Activated naive CD4-positive, alpha-beta T cell treated with anti-CD3 and anti-CD28 coated beads for 36 hours (primary cell): ENCODE measurements at regions of chr14 and their contacts with region 1.

Region 1: GRCh38 chr14:68795597-68796417 is 2.9 kb upstream of the ZFP36L1 start:
- DNase-seq: peak; percentile 85
- H3K4me3 Mint-ChIP-seq: peak overlapping the region; percentile 90
- H3K27ac Mint-ChIP-seq: peak overlapping the region; percentile 100
- H3K4me1 Mint-ChIP-seq: peaks cover 44% of the 10 kb centered on the region
- H3K27me3 Mint-ChIP-seq: no peaks in the 10 kb centered on the region

Region 2: DNA sequence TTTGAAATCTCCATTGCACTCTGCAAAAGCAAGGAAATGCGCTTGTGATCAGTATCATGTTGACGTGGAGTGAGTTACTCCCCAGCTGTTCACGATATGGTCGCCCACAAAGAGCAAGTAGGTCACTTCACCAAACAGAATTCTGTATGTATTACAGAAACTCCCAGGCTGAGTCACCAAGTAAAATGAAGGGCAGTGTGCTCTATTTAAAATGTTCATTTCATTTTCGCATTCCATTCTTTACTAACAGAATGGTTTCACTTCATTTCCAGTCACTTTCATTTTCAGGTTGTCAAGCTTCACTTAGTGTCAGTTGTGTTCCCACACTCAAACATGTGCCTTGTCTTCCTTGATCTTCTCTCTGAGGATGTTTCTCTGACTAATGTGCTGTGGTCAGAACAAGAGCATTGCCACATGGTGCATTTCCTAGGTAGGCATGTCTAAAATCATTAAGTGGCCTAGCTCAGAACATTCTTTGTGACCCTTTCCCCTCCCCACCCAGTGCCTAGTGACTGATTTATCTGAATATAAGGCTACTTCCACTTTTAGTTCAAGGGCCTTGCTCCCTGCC is 585.0 kb before region 1 on chr14:
- CTCF ChIA-PET with region 1: no interaction called
- intact Hi-C with region 1: loop called (anchors 2 kb)
- DNase-seq: peak; percentile 74
- H3K4me3 Mint-ChIP-seq: peak overlapping the region; percentile 11
- H3K27ac Mint-ChIP-seq: peak overlapping the region; percentile 57
- H3K4me1 Mint-ChIP-seq: peaks cover 48% of the 10 kb centered on the region
- H3K27me3 Mint-ChIP-seq: no peaks in the 10 kb centered on the region

Region 3: GRCh38 chr14:68685419-68686204 is 110.2 kb before region 1 on chr14:
- CTCF ChIA-PET with region 1: no interaction called
- intact Hi-C with region 1: loop called (anchors 1 kb)
- DNase-seq: peak; percentile 90
- H3K4me3 Mint-ChIP-seq: peak overlapping the region; percentile 19
- H3K27ac Mint-ChIP-seq: peak overlapping the region; percentile 91
- H3K4me1 Mint-ChIP-seq: peaks cover 54% of the 10 kb centered on the region
- H3K27me3 Mint-ChIP-seq: no peaks in the 10 kb centered on the region

Region 4: GRCh38 chr14:68843471-68844209 is 47.8 kb after region 1 on chr14:
- CTCF ChIA-PET with region 1: interaction called, 6 read pairs
- intact Hi-C with region 1: loop called (anchors 2 kb)
- DNase-seq: peak; percentile 86
- H3K4me3 Mint-ChIP-seq: no peak overlapping the region
- H3K27ac Mint-ChIP-seq: no peak overlapping the region
- H3K4me1 Mint-ChIP-seq: peaks cover 23% of the 10 kb centered on the region
- H3K27me3 Mint-ChIP-seq: no peaks in the 10 kb centered on the region

Region 5: GRCh38 chr14:69193721-69194120 is 397.9 kb after region 1 on chr14:
- CTCF ChIA-PET with region 1: no interaction called
- intact Hi-C with region 1: no loop called
- DNase-seq: peak; percentile 19
- H3K4me3 Mint-ChIP-seq: peak overlapping the region; percentile 31
- H3K27ac Mint-ChIP-seq: no peak overlapping the region
- H3K4me1 Mint-ChIP-seq: peaks cover 23% of the 10 kb centered on the region
- H3K27me3 Mint-ChIP-seq: no peaks in the 10 kb centered on the region

Region 6: DNA sequence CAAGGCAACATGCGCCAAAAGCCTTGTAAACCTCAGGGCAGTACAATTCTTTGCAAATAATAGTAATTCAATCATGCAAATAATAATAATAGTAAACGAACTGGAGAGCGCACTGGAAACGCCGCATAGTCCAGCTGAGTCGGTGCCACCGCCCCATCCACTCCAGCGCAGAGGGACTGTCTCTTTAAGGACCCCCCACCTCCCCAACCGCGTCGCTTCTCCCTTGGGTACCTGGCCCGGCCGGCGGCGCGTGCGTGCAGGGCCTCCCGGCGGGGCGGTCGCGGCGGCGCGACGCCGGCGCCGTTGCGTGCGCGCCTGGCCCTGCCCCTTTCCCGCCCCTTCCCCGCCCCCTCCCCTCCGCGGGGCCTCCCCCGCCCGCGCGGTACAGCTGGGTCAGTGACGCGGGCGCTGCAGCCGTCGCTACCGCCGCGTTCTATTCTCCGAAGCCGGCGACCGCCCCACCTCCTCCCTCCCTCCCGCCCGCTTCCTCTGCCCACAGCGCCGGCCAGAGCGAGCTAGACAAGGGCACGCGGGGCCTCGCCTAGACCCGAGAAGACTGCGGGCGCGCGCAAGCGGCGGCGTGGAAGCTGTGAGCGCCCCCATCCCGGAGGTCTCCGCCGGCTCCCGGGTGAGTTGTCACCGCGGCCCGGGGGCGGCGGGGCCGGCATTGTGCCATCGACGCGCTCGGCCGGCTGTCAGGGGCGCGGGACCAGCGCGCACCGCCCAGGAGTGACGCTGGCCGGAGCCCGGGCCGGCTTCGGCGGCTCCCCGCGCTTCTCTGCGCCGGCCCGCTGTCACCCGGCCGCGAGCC is 815.6 kb after region 1 on chr14 and contains the start of gene SUSD6:
- CTCF ChIA-PET with region 1: no interaction called
- intact Hi-C with region 1: loop called (anchors 5 kb)
- DNase-seq: peak; percentile 88
- H3K4me3 Mint-ChIP-seq: peak within 1 kb of the TSS; percentile 92
- H3K27ac Mint-ChIP-seq: peak within 1 kb of the TSS; percentile 91
- H3K4me1 Mint-ChIP-seq: peaks cover 53% of the 10 kb centered on the region
- H3K27me3 Mint-ChIP-seq: no peaks in the 10 kb centered on the region
- total RNA-seq, gene SUSD6: 66.6 to 69.7 TPM